ENCODE measurements at regions of chr2 and their contacts with region 1.

Region 1: DNA sequence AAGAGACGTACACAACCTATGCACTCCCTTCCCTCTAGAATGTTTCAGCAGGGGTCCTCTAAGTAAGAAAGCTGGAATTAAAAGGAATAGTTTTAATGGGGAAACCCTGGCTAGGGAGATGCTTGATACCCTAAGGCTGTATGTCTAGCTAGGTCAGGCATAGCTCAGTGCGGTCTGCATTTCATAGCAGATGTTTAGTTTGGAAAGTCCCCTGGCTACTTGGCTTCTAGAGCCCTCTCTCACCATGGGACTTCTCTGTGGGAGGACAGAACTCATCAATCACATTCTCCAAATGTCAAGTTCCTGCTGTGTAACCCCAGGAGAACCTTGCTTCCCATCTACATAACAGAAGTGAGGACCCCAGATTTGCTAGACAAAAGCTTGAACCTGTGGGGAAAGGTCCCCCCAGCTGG is 24.1 kb upstream of the ANXA4 start:
- DNase-seq: no peak
- ATAC-seq: no peak
- H3K4me3 ChIP-seq: no peak overlapping the region
- H3K27ac ChIP-seq: no peak overlapping the region
- H3K4me1 ChIP-seq: peaks cover 0 to 8% (median 0%) of the 10 kb centered on the region in 12 donors
- H3K27me3 ChIP-seq: no peaks in the 10 kb centered on the region
- CTCF ChIP-seq: no peak
- POLR2A ChIP-seq: no peak

Region 2: DNA sequence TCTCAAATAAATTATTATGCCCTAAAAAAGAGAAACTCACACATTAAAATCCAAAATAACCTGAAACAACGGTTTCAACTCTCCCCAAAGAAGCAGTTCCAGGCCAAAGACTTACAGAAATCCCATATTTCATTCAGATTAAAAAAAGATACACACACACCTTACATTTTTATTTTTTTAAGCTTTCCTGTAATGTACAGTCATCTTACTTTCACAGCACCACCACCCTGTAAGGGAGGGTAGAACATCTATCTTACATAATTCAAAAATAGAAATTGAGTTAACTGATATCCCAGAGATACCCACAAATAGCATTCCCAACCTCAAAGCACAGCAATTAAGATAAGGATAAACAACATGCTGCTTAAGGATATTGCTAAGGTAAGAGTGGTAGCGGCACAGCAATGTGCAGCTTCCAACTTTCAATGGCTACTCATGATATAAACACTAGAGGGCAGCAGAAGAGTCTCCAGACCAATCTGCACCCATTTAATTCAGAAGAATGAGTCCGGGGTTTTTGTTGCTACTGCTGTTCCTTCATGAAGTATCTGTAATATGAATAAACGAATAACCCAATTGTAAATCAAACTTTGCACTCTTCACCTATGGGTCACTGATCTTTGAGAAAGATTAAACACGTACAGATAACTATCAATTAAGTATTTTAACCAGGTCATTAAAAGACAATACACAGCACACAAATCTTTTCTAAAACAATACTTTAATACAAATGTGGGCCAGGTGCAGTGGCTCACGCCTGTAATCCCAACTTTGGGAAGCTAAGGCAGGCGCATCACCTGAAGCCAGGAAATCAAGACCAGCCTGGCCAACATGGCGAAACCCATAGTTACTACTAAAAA is 342.1 kb before region 1 on chr2:
- intact Hi-C with region 1: loop called in 5 of 10 experiments (anchors 10 kb)
- DNase-seq: no peak
- ATAC-seq: peak; percentile 40 to 72 (median 71)
- H3K4me3 ChIP-seq: no peak overlapping the region
- H3K27ac ChIP-seq: no peak overlapping the region
- H3K4me1 ChIP-seq: peaks cover 0 to 17% (median 6%) of the 10 kb centered on the region in 12 donors
- H3K27me3 ChIP-seq: no peaks in the 10 kb centered on the region
- CTCF ChIP-seq: peak; percentile 54 to 71 (median 60)
- POLR2A ChIP-seq: no peak

Region 3: GRCh38 chr2:69559442-69560146 is 158.3 kb before region 1 on chr2:
- intact Hi-C with region 1: loop called (anchors 1 to 5 kb)
- DNase-seq: no peak
- ATAC-seq: peak; percentile 30 to 81 (median 77)
- H3K4me3 ChIP-seq: no peak overlapping the region
- H3K27ac ChIP-seq: peak overlapping the region in 4 of 12 donors; percentile 4 to 47 (median 31)
- H3K4me1 ChIP-seq: peaks cover 10 to 62% (median 38%) of the 10 kb centered on the region in 12 donors
- H3K27me3 ChIP-seq: no peaks in the 10 kb centered on the region
- CTCF ChIP-seq: peak; percentile 49 to 75 (median 66)
- POLR2A ChIP-seq: no peak

Region 4: GRCh38 chr2:69660637-69661036 is 57.2 kb before region 1 on chr2:
- intact Hi-C with region 1: loop called in 1 of 10 experiments (anchors 5 kb)
- DNase-seq: no peak
- ATAC-seq: no peak
- H3K4me3 ChIP-seq: no peak overlapping the region
- H3K27ac ChIP-seq: peak overlapping the region in 7 of 12 donors; percentile 5 to 59 (median 37)
- H3K4me1 ChIP-seq: peaks cover 0 to 21% (median 7%) of the 10 kb centered on the region in 12 donors
- H3K27me3 ChIP-seq: no peaks in the 10 kb centered on the region
- CTCF ChIP-seq: no peak
- POLR2A ChIP-seq: no peak